Activated T-helper 2 cell treated with anti-CD3 and anti-CD28 coated beads, Interferon-gamma antibody, Interleukin-2, Interleukin-4, amounts not matched to agents 10 μg/mL and 5 μg/mL and 100 μg/mL, durations not matched to agents 14 hours and 24 hours and 36 hours (primary cell): ENCODE measurements at regions of chr20 and their contacts with region 1.

Region 1: DNA sequence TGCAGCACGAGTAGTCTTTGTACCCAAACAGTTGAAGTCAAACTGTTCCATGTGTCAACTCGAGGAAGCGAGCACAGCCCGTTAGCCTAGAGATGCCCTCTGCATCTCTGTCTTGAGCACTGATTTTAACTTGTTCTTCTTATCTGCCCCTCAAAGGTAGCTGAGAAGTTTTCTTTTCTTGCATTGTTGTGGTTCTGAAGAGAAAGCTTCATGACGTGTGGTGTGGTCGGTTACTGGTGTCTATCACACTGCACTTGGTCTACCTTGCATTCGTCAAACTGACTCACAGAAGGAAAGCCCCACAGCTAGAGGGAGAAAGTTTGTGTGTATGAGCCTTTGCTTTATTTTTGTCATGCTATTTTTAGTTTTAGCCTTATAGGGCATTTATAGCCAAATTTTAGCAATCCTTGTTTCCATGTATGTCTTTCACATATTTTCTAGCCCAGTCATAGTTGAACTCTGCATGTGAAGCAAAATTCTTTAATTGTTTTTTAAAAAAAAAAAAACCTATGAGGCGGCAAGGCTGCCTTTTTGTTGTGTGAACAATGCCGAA is 115.1 kb downstream of the JAG1 start:
- DNase-seq: peak; percentile 50
- H3K4me3 Mint-ChIP-seq: peak overlapping the region; percentile 17
- H3K27ac Mint-ChIP-seq: no peak overlapping the region
- H3K4me1 Mint-ChIP-seq: peaks cover 38% of the 10 kb centered on the region
- H3K27me3 Mint-ChIP-seq: peaks cover 7% of the 10 kb centered on the region

Region 2: DNA sequence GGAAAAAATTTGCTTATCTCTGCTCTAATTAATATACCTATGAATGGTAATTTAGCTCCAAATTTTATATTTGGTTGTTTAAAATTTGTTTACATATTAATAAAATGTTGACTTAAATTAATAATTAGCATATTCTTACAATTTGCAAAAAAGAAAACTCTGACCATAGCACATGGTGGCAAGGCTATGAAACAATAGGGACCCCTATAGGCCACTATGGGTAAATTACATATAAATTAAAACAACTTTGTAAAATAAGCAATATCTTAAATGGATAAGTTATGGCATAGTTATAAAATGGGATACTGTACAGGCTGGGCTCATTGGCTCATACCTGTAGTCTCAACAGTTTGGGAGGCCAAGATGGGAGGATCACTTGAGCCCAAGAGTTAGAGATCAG is 200.7 kb before region 1 on chr20:
- intact Hi-C with region 1: loop called (anchors 5 kb)
- DNase-seq: no peak
- H3K4me3 Mint-ChIP-seq: no peak overlapping the region
- H3K27ac Mint-ChIP-seq: no peak overlapping the region
- H3K4me1 Mint-ChIP-seq: peaks cover 14% of the 10 kb centered on the region
- H3K27me3 Mint-ChIP-seq: peaks cover 4% of the 10 kb centered on the region

Region 3: GRCh38 chr20:10578607-10579006 is 19.9 kb after region 1 on chr20:
- intact Hi-C with region 1: loop called (anchors 1 kb)
- DNase-seq: no peak
- H3K4me3 Mint-ChIP-seq: no peak overlapping the region
- H3K27ac Mint-ChIP-seq: no peak overlapping the region
- H3K4me1 Mint-ChIP-seq: peaks cover 15% of the 10 kb centered on the region
- H3K27me3 Mint-ChIP-seq: no peaks in the 10 kb centered on the region

Region 4: DNA sequence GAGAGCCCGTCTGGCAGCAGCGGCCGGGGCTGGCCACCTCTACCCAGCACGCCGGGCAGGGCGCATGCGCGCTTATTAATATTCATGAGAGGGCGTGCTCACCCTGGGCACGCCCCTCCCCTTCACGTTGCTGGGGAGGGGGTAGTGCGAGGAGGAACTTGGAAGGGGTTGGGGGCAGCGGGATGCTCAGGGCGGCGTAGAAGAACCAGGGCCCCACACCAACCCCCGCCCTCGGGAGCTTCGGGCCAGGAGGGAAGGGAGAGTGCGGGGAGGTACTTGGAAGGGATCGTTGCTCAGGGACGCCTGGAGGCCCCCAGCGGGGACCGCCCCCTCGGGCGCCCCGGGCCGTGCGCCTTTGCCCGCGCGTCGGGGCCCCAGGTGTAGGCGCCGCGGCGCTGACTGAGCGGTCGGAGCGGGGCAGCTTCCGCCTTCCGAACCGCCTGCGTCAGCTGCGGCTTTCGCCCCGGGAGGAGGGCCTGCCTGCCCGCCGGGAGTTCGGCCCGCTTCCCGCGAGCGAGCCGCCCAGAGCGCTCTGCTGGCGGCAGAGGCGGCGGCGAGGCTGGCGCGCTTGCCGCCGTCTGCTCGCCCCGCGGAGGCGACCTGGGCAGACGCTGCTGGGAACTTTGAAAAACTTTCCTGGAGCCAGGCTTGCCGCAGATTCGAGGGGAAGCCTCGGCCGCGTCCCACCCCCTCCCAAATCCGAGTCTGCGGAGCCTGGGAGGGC is 115.4 kb after region 1 on chr20 and contains the start of gene JAG1:
- intact Hi-C with region 1: loop called (anchors 1 kb)
- DNase-seq: peak; percentile 78
- H3K4me3 Mint-ChIP-seq: peak within 1 kb of the TSS; percentile 92
- H3K27ac Mint-ChIP-seq: peak within 1 kb of the TSS; percentile 87
- H3K4me1 Mint-ChIP-seq: peaks cover 30% of the 10 kb centered on the region
- H3K27me3 Mint-ChIP-seq: peaks cover 68% of the 10 kb centered on the region
- total RNA-seq, gene JAG1: 2.8 and 3.1 TPM in 2 replicates

Region 5: GRCh38 chr20:11204926-11205768 is 646.4 kb after region 1 on chr20:
- intact Hi-C with region 1: loop called (anchors 5 kb)
- DNase-seq: no peak
- H3K4me3 Mint-ChIP-seq: no peak overlapping the region
- H3K27ac Mint-ChIP-seq: no peak overlapping the region
- H3K4me1 Mint-ChIP-seq: no peaks in the 10 kb centered on the region
- H3K27me3 Mint-ChIP-seq: no peaks in the 10 kb centered on the region